ENCODE measurements at regions of chr18 and their contacts with region 1.

Region 1: GRCh38 chr18:9136315-9137155 is at the start of gene ANKRD12:
- DNase-seq: peak; percentile 97 to 99 (median 98)
- H3K4me3 ChIP-seq: peak within 1 kb of the TSS; percentile 52 to 88
- H3K4me3 Mint-ChIP-seq: peak within 1 kb of the TSS; percentile 97 to 99 (median 98)
- H3K27ac ChIP-seq: peak within 1 kb of the TSS; percentile 90
- H3K27ac Mint-ChIP-seq: peak within 1 kb of the TSS; percentile 99 to 100 (median 99)
- H3K4me1 ChIP-seq: peaks cover 72% of the 10 kb centered on the region
- H3K4me1 Mint-ChIP-seq: peaks cover 43 to 85% (median 57%) of the 10 kb centered on the region in 4 donors
- H3K27me3 ChIP-seq: no peaks in the 10 kb centered on the region
- H3K27me3 Mint-ChIP-seq: peaks cover 0 to 2% of the 10 kb centered on the region in 2 donors
- total RNA-seq, gene ANKRD12: 262 to 280 TPM

Region 2: DNA sequence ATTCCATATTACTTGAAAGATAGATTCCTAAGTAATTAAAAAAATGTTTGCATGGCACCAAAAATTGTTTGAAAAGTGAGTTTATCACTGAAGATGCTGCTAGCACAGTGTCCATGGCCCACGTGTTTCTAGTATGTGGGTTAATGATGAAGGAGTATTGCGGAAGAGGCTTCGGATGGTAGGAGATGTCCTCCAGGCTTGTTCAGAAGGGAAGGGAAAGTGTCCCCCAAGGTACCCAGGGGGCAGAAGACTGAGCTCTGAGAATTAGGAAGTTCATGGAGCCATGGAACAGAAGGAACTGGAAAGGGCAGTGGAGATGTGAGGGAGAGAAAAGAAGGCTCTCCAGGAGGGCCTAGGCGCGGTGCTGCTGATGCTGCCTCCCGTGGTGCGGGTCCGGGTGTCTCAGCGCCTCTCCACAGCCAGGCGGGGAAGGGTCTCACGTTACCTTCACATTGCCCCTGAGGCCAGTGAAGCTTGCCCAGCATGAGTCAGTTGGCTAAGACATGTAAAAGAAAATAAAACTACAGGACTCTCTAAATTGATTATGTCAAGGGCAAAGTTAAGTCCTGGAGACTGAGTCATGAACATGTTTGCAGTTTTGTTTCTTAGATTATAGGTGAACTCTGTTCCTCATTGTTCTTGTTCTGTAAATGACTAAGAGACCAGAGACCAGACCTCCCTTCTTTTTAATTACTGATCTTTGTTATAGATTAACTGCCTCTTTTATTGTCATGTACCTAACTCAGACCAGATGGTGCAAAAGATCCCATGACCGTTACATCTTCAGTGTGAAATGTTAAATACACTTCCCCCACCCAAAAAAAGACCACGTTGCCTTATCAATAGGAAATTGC is 342.2 kb before region 1 on chr18:
- CTCF ChIA-PET with region 1: no interaction called
- POLR2A ChIA-PET with region 1: no interaction called
- intact Hi-C with region 1: no loop called
- DNase-seq: no peak
- H3K4me3 ChIP-seq: no peak overlapping the region
- H3K4me3 Mint-ChIP-seq: no peak overlapping the region
- H3K27ac ChIP-seq: no peak overlapping the region
- H3K27ac Mint-ChIP-seq: no peak overlapping the region
- H3K4me1 ChIP-seq: no peaks in the 10 kb centered on the region
- H3K4me1 Mint-ChIP-seq: peaks cover 0 to 2% (median 0%) of the 10 kb centered on the region in 4 donors
- H3K27me3 ChIP-seq: no peaks in the 10 kb centered on the region
- H3K27me3 Mint-ChIP-seq: peaks cover 0 to under 1% of the 10 kb centered on the region in 2 donors

Region 3: DNA sequence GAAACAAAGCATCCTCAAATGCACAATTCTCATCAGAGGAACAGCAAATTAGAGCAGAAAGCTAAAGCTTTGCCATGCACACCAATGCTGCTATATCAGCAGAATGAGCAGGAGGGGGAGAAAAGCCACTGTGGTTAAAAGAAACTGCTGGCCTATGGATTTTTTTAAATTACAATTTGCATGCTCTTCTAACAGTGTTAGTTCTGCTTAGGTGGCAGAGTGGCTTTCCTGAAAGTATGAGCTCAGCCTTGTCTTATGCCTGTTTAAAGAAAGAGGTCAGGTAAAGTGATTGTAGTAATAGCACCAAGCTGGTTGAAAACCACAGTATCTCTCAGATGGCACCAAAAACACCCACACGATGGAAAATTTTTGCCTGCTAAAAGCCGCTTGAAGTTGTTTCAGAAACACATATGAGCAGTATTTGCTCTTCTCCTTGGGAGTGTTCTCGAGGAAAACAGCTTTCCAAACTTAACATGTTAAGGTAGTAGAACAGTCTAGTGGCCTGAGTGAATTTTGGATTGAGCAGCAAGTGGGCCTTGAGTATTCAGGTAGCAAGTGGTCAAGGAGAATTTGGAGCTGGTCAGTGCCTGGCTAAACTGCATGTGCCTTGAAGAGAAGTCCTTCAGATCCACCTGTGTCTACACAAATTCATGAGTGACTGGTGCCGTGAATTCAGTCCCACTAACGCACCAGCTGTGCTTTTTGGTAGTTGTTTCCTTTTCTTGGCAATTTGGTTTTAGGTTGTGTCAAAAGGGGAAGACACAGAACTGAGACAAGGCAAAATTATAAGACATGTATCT is 53.6 kb before region 1 on chr18:
- CTCF ChIA-PET with region 1: interaction called, 6 read pairs
- POLR2A ChIA-PET with region 1: interaction called, 238 read pairs
- intact Hi-C with region 1: loop called (anchors 1 kb)
- DNase-seq: peak; percentile 53 to 81 (median 66)
- H3K4me3 ChIP-seq: peak overlapping the region in 1 of 2 donors; percentile 25
- H3K4me3 Mint-ChIP-seq: peak overlapping the region; percentile 43 to 84 (median 68)
- H3K27ac ChIP-seq: peak overlapping the region; percentile 58
- H3K27ac Mint-ChIP-seq: peak overlapping the region; percentile 92 to 97 (median 95)
- H3K4me1 ChIP-seq: peaks cover 54% of the 10 kb centered on the region
- H3K4me1 Mint-ChIP-seq: peaks cover 27 to 50% (median 40%) of the 10 kb centered on the region in 4 donors
- H3K27me3 ChIP-seq: no peaks in the 10 kb centered on the region
- H3K27me3 Mint-ChIP-seq: no peaks in the 10 kb centered on the region

Region 4: GRCh38 chr18:9117980-9118841 is 18.3 kb before region 1 on chr18:
- CTCF ChIA-PET with region 1: interaction called, 51 read pairs
- POLR2A ChIA-PET with region 1: interaction called, 823 read pairs
- intact Hi-C with region 1: loop called (anchors 1 kb)
- DNase-seq: peak in 4 of 5 donors; percentile 47 to 54 (median 52)
- H3K4me3 ChIP-seq: peak overlapping the region; percentile 8 to 28
- H3K4me3 Mint-ChIP-seq: peak overlapping the region; percentile 62 to 91 (median 84)
- H3K27ac ChIP-seq: peak overlapping the region; percentile 80
- H3K27ac Mint-ChIP-seq: peak overlapping the region; percentile 96 to 100 (median 98)
- H3K4me1 ChIP-seq: peaks cover 98% of the 10 kb centered on the region
- H3K4me1 Mint-ChIP-seq: peaks cover 51 to 86% (median 69%) of the 10 kb centered on the region in 4 donors
- H3K27me3 ChIP-seq: no peaks in the 10 kb centered on the region
- H3K27me3 Mint-ChIP-seq: no peaks in the 10 kb centered on the region

Region 5: GRCh38 chr18:9334329-9334972 is 197.9 kb after region 1 on chr18 and contains the start of gene TWSG1:
- CTCF ChIA-PET with region 1: interaction called, 4 read pairs
- POLR2A ChIA-PET with region 1: interaction called, 10 read pairs
- intact Hi-C with region 1: loop called (anchors 1 kb)
- DNase-seq: peak; percentile 90 to 94 (median 91)
- H3K4me3 ChIP-seq: peak within 1 kb of the TSS; percentile 76 to 90
- H3K4me3 Mint-ChIP-seq: peak within 1 kb of the TSS; percentile 85 to 96 (median 90)
- H3K27ac ChIP-seq: peak within 1 kb of the TSS; percentile 57
- H3K27ac Mint-ChIP-seq: peak within 1 kb of the TSS; percentile 83 to 93 (median 91)
- H3K4me1 ChIP-seq: peaks cover 17% of the 10 kb centered on the region
- H3K4me1 Mint-ChIP-seq: peaks cover 8 to 27% (median 18%) of the 10 kb centered on the region in 4 donors
- H3K27me3 ChIP-seq: no peaks in the 10 kb centered on the region
- H3K27me3 Mint-ChIP-seq: peaks cover 1 to 6% of the 10 kb centered on the region in 2 donors
- total RNA-seq, gene TWSG1: 5.1 to 6.0 TPM